Activated T-helper 1 cell treated with anti-CD3 and anti-CD28 coated beads, Interleukin-12 subunit alpha, Interleukin-12 subunit beta, Interleukin-2, Interleukin-4 antibody, amounts not matched to agents 30 ng/mL and 10 ng/mL and 1 ng/mL, durations not matched to agents 14 hours and 24 hours and 36 hours (primary cell): ENCODE measurements at regions of chr18 and their contacts with region 1.

Region 1: GRCh38 chr18:5295981-5296705 is 617 bp upstream of the ZBTB14 start:
- DNase-seq: peak; percentile 91
- H3K4me3 Mint-ChIP-seq: peak overlapping the region; percentile 94
- H3K27ac Mint-ChIP-seq: peak overlapping the region; percentile 98
- H3K4me1 Mint-ChIP-seq: peaks cover 34% of the 10 kb centered on the region
- H3K27me3 Mint-ChIP-seq: peaks cover 16% of the 10 kb centered on the region

Region 2: GRCh38 chr18:5103286-5103685 is 192.9 kb before region 1 on chr18:
- intact Hi-C with region 1: no loop called
- DNase-seq: no peak
- H3K4me3 Mint-ChIP-seq: no peak overlapping the region
- H3K27ac Mint-ChIP-seq: no peak overlapping the region
- H3K4me1 Mint-ChIP-seq: no peaks in the 10 kb centered on the region
- H3K27me3 Mint-ChIP-seq: no peaks in the 10 kb centered on the region

Region 3: DNA sequence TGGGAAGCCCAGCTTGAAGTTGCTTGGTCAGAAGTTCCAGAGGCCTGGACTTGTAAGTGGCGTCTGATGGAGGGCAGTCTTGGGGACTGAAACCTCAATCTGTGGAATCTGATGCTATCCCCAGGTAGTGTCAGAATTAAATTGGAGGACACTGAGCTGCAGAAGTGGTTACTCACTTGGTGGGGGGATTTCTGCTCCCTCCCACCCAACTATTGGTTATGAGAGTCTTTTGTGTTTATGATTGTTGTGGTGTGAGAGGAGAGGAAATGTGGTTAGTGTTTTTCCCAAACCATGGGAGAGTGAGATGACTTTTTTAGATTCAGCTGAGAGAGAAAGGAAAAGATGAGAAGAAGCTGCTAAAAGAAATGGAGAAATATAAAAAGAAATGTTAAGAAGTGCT is 13.4 kb before region 1 on chr18:
- intact Hi-C with region 1: loop called (anchors 1 kb)
- DNase-seq: no peak
- H3K4me3 Mint-ChIP-seq: no peak overlapping the region
- H3K27ac Mint-ChIP-seq: peak overlapping the region; percentile 55
- H3K4me1 Mint-ChIP-seq: peaks cover 14% of the 10 kb centered on the region
- H3K27me3 Mint-ChIP-seq: no peaks in the 10 kb centered on the region

Region 4: DNA sequence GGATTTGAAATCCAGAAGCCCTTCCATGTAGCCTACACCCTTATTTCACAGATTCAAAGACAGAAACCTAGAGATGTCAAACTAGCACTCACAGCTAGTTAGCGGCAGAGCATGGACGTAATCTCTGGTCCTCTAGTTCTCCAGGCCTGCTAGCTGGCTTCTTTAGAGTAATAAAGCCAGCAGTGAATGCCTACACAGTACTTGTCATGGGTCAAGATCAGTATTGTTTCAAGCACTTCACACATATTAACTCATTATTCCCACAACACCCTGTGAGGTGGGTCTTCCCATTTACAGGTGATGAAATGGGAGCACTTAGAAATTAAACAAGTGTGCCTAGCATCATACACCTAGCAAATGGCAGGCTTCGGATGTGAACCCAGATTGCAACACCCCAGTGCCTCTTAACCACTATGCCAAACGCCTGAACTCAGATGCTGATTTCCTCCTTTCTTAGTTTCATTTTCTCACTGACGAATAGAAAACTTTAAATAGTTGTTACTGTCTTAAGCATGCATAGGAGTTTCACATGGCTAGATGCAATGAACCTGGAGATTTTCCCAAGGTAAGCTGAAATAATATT is 13.8 kb after region 1 on chr18:
- intact Hi-C with region 1: loop called (anchors 1 kb)
- DNase-seq: peak; percentile 19
- H3K4me3 Mint-ChIP-seq: peak overlapping the region; percentile 57
- H3K27ac Mint-ChIP-seq: peak overlapping the region; percentile 38
- H3K4me1 Mint-ChIP-seq: peaks cover 10% of the 10 kb centered on the region
- H3K27me3 Mint-ChIP-seq: no peaks in the 10 kb centered on the region

Region 5: DNA sequence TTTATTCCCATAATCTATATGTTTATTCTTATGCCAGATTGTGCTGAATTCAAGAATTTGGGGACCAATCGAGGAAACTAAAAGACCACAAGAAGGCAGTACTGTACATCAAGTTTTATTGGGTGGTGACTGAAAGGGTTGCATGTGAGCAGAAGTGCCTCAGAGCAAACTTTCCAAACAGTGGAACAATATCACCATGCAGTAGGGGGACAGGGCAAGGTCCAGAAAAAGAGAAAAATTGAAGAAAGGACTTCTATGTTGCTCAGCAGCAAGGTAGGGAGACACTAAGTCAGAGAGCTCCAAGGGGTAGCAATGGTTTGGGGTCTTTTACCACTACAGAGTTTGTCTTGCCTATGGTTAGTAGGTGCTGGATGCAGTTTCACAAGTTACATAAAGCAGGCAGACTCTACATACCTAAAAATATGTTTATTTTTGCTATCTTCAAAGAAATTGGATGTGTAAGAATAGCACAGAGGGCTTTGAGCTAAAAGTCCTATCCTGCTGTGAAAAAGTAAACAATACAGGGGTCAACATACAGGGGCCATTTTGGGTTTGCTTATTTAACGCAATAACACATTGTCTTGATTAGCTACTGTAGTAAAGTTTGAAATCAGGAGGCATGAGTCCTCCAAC is 43.2 kb after region 1 on chr18:
- intact Hi-C with region 1: no loop called
- DNase-seq: no peak
- H3K4me3 Mint-ChIP-seq: no peak overlapping the region
- H3K27ac Mint-ChIP-seq: no peak overlapping the region
- H3K4me1 Mint-ChIP-seq: no peaks in the 10 kb centered on the region
- H3K27me3 Mint-ChIP-seq: no peaks in the 10 kb centered on the region

Region 6: DNA sequence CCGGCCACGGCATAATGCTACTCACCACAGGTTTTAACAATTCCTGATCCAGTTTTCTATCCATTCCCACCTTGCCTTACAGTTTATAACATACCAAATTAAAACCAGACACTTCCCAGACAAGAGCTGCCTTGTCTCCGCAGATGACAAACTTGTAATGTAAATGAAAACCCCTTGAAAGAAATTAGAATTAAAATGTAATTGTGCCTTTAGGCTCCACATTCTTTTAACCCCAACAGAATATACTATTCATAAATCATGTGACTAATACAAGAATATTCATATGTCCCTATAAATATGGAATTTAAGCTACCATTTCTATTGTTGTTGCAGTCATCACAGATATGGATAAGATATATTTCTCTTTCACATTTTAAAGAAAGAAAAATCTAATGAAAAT is 69.3 kb after region 1 on chr18:
- intact Hi-C with region 1: no loop called
- DNase-seq: no peak
- H3K4me3 Mint-ChIP-seq: no peak overlapping the region
- H3K27ac Mint-ChIP-seq: no peak overlapping the region
- H3K4me1 Mint-ChIP-seq: no peaks in the 10 kb centered on the region
- H3K27me3 Mint-ChIP-seq: peaks cover 1% of the 10 kb centered on the region

Region 7: DNA sequence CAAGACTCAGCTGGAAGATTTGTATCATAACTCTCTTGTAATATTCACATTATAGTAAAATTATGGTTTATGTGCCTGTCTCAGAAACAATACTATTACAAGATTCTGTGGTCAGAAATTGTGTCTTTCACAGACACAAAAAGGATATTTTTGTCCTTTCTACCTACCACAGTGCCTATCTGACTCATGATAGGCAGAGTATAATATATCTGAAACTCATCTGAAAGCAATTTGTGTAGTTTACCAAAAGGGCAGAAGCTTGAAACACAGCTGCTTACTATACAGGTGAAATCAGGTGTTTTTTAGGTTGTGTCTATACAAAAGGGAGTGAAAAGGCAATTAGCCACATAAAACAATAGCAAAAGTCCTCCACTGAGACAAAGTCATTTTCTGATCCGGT is 588.2 kb after region 1 on chr18:
- intact Hi-C with region 1: no loop called
- DNase-seq: no peak
- H3K4me3 Mint-ChIP-seq: no peak overlapping the region
- H3K27ac Mint-ChIP-seq: no peak overlapping the region
- H3K4me1 Mint-ChIP-seq: no peaks in the 10 kb centered on the region
- H3K27me3 Mint-ChIP-seq: peaks cover 34% of the 10 kb centered on the region